Dorsolateral prefrontal cortex (tissue), 120 donors: ENCODE measurements at regions of chr1 and their contacts with region 1.

Region 1: GRCh38 chr1:30342535-30343141 is 380.7 kb downstream of the MATN1 start:
- DNase-seq: no peak
- H3K4me3 ChIP-seq: no peak overlapping the region
- H3K27ac ChIP-seq: no peak overlapping the region
- H3K27me3 ChIP-seq: peaks cover 0 to 51% (median 20%) of the 10 kb centered on the region in 45 donors
- CTCF ChIP-seq: no peak

Region 2: DNA sequence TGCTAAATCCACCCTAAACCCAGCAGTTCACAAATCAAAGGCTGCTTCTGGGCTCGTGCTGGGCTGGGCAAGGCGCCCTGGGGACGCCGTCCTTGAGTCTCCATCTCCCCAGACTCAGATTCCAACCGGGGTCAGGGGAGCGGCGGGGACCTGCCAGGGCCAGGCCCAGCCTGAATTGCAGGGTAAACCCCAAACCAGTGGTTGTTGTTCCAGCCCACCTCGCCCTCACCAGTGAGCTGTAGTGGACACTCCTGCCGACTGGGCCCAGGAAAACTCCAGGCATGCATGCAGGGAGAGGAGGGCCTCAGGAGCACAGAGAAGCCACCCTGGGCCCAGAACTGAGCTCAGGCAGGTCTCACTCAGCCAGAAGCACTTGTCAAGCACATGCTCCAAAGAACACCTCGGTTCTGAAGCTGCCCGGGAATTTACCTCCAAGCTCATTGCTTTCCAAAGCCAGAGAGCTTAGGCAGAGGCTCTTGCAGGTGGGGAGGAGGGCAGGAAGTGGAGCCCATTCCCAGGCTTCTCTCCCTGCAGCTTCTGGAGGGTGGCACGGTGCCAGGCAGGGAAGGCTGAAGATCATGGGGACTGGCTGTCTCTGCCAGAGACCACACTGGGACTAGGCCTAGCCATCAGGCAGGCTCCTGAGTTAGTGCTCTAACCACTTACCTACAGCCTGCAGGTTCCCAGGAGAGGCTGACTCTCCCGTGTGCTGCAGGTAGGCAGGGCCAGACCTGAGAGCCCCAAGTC is 56.2 kb before region 1 on chr1:
- intact Hi-C with region 1: loop called in 1 of 2 experiments (anchors 2 kb)
- DNase-seq: no peak
- H3K4me3 ChIP-seq: no peak overlapping the region
- H3K27ac ChIP-seq: no peak overlapping the region
- H3K27me3 ChIP-seq: peaks cover 0 to 19% (median 0%) of the 10 kb centered on the region in 45 donors
- CTCF ChIP-seq: no peak

Region 3: DNA sequence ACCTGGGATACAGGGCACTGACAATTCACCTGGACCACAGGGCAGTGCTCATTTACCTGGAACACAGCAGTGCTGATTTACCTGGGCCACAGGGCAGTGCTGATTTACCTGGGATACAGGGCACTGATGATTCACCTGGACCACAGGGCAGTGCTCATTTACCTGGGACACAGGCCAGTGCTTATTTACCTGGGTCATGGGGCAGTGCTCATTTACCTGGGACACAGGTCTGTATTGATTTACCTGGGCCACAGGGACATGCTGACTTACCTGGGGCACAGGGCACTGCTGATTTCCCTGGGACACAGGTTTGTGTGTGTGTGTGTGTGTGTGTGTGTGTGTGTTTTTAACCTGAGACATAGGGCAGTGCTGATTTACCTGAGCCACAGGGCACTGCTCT is 119.0 kb after region 1 on chr1:
- intact Hi-C with region 1: no loop called
- DNase-seq: no peak
- H3K4me3 ChIP-seq: no peak overlapping the region
- H3K27ac ChIP-seq: no peak overlapping the region
- H3K27me3 ChIP-seq: peaks cover 0 to 23% (median 0%) of the 10 kb centered on the region in 45 donors
- CTCF ChIP-seq: no peak

Region 4: DNA sequence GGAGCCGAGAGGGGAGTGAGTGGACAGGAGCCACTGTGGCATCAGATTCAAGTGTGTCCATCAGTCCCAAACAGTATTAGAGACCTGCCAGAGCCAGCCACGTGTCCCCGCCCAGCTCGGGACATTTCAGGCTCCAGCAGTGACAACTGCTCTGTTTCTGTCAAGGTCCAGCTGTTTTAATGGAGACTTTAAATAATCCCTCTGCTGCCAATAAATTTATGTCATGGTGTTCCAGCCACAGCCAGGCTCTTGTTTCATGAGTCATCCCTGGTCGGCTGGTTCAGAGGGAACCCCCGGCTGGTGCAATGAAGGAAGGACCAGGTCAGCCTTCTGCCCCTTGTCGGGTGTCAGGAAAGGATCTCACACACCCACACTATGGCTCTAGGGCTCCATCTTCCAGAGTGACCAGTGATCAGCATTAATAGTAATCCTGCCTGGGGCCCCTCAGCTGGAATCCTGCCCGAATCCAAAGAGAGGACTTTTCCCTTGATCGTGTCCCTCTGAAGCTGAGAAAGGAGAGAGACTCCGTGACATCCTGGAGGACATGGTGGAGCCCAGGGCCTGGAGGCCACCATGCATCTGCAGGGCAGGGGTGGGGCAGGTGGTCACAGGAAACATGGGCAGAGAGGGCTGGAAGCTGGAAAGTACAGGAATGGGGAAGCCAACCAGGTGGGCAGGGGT is 183.5 kb after region 1 on chr1:
- intact Hi-C with region 1: no loop called
- DNase-seq: peak in 1 of 10 donors; percentile 16
- H3K4me3 ChIP-seq: no peak overlapping the region
- H3K27ac ChIP-seq: no peak overlapping the region
- H3K27me3 ChIP-seq: peaks cover 0 to 29% (median 6%) of the 10 kb centered on the region in 45 donors
- CTCF ChIP-seq: no peak